Activated CD8-positive, alpha-beta T cell treated with anti-CD3 and anti-CD28 coated beads for 36 hours (primary cell): ENCODE measurements at regions of chr12 and their contacts with region 1.

Region 1: GRCh38 chr12:121060149-121061001 is 21.3 kb upstream of the OASL start:
- DNase-seq: peak; percentile 71
- ATAC-seq: peak; percentile 96
- H3K4me3 Mint-ChIP-seq: peak overlapping the region; percentile 68
- H3K27ac Mint-ChIP-seq: peak overlapping the region; percentile 93
- H3K4me1 Mint-ChIP-seq: peaks cover 13% of the 10 kb centered on the region
- H3K27me3 Mint-ChIP-seq: no peaks in the 10 kb centered on the region
- CTCF ChIP-seq: peak; percentile 61

Region 2: DNA sequence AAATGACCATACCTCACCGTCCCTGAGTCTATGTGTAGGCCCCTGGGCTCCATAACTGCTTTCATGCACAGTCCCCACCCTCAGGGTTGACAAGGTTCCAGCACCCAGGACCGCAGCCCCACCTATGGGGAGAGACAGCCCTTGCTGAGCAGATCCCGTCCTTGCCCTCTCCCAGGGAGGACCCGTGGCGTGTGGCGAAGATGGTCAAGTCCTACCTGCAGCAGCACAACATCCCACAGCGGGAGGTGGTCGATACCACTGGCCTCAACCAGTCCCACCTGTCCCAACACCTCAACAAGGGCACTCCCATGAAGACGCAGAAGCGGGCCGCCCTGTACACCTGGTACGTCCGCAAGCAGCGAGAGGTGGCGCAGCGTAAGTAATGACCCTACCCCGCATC is 71.7 kb before region 1 on chr12:
- CTCF ChIA-PET with region 1: no interaction called
- POLR2A ChIA-PET with region 1: no interaction called
- intact Hi-C with region 1: no loop called
- DNase-seq: no peak
- ATAC-seq: no peak
- H3K4me3 Mint-ChIP-seq: no peak overlapping the region
- H3K27ac Mint-ChIP-seq: no peak overlapping the region
- H3K4me1 Mint-ChIP-seq: no peaks in the 10 kb centered on the region
- H3K27me3 Mint-ChIP-seq: no peaks in the 10 kb centered on the region
- CTCF ChIP-seq: no peak

Region 3: DNA sequence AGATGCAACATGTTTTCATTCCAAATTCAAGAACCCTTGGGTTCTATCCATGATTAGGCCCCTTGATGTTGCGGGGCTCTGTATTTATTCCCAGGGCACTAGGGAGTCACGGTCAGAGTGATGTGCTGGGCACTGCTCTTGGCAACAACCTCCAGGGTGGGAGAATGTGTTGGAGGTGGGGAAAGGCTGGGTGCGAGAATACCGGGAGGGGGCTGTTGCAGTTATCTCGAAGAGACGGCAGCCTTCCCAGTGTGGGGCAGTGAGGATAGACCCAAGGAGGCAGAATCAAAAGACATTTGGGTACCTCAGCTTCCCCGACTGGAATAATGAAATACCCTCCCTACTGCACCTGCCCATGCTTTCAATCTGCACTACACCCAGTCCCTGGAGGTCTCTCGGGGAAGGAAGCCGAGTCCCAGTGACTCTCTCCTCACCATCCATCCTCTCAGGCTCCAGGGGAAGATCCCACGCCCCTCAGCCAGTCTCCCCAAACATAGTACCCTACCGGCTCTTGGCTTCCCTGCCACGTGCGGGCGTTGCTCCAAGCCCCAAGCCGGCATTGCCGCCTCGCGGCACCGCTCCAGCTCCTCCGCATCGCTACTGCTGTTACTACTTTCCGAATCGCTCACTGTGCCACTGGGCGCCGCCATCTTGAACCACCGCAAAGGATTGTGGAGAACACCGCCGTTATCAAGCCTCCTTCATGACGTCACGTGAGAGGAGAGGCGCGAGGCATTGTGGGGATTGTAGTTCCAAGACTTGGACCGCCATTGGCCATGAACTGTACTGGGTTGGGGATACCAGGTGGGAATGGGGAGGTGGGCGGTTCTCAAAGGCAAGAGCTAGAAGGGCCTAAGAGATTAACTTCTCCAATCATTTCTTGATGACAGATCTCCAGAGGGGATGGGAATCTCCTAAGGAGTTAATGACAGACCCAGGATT is 44.3 kb before region 1 on chr12 and contains the start of gene C12orf43:
- CTCF ChIA-PET with region 1: interaction called, 12 read pairs
- POLR2A ChIA-PET with region 1: interaction called, 8 read pairs
- intact Hi-C with region 1: no loop called
- DNase-seq: peak; percentile 98
- ATAC-seq: peak; percentile 98
- H3K4me3 Mint-ChIP-seq: peak within 1 kb of the TSS; percentile 98
- H3K27ac Mint-ChIP-seq: peak within 1 kb of the TSS; percentile 94
- H3K4me1 Mint-ChIP-seq: peaks cover 23% of the 10 kb centered on the region
- H3K27me3 Mint-ChIP-seq: no peaks in the 10 kb centered on the region
- CTCF ChIP-seq: no peak
- total RNA-seq, gene C12orf43: 19.8 to 20.7 TPM

Region 4: GRCh38 chr12:121038861-121039666 is 21.3 kb before region 1 on chr12 and contains the start of gene OASL:
- CTCF ChIA-PET with region 1: interaction called, 20 read pairs
- POLR2A ChIA-PET with region 1: interaction called, 9 read pairs
- intact Hi-C with region 1: no loop called
- DNase-seq: peak; percentile 65
- ATAC-seq: peak; percentile 55
- H3K4me3 Mint-ChIP-seq: peak within 1 kb of the TSS; percentile 80
- H3K27ac Mint-ChIP-seq: peak within 1 kb of the TSS; percentile 87
- H3K4me1 Mint-ChIP-seq: peaks cover 51% of the 10 kb centered on the region
- H3K27me3 Mint-ChIP-seq: peaks cover 9% of the 10 kb centered on the region
- CTCF ChIP-seq: no peak
- total RNA-seq, gene OASL: 11.1 to 11.4 TPM

Region 5: DNA sequence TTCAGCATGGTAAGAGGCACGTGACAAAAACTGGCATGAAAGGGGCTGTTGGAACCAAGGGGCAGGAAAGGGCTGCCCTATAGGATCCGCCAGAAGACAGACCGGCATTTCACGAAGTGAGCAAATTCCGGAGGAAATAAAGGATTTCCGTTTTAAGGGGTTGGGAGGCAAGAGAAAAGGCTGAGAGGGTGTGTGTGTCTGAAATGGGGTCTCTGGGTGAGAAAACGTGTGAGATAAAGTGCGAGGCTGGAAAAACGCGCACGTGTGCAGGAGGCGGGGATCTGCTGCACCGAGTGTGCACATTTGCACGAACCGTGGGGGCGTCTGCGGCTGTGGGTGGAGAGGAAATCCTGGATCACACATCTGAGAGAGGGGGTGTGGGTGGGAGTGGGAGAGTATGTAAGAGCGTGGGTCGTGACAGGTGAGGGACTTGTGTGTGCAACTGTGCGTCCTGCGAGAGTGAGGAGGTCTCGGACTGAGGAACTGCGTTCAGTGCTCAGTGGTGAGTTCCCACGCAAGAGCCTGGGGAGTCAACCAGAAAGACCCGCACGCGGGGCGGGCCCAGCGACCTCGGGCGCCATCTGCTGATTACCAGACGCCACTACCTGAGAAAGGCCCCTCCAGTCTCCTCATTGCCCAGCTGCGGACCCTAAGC is 35.3 kb after region 1 on chr12:
- CTCF ChIA-PET with region 1: interaction called, 23 read pairs
- POLR2A ChIA-PET with region 1: interaction called, 5 read pairs
- intact Hi-C with region 1: loop called (anchors 5 kb)
- DNase-seq: peak; percentile 87
- ATAC-seq: peak; percentile 91
- H3K4me3 Mint-ChIP-seq: peak overlapping the region; percentile 55
- H3K27ac Mint-ChIP-seq: no peak overlapping the region
- H3K4me1 Mint-ChIP-seq: peaks cover 39% of the 10 kb centered on the region
- H3K27me3 Mint-ChIP-seq: peaks cover 5% of the 10 kb centered on the region
- CTCF ChIP-seq: peak; percentile 90

Region 6: DNA sequence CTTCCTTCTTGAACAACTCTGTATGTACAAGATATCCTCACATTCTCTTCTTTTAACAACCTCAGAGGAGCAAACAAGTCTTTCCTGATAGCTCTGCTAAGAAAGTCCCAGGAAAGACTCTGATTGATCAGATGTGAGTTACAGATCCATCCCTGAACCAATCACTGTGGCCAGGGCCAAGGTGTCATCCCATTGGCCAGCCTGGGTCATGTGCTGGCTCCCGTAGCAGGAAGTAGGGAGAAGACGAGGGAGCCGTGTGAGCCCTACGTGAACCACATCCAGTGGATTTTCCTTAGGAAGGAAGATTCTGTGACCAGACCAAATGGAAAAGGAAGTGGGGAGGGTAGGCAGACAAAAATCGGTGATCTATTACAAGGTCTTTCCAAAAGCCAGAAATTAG is 77.9 kb after region 1 on chr12:
- CTCF ChIA-PET with region 1: no interaction called
- POLR2A ChIA-PET with region 1: no interaction called
- intact Hi-C with region 1: no loop called
- DNase-seq: no peak
- ATAC-seq: no peak
- H3K4me3 Mint-ChIP-seq: no peak overlapping the region
- H3K27ac Mint-ChIP-seq: no peak overlapping the region
- H3K4me1 Mint-ChIP-seq: peaks cover 14% of the 10 kb centered on the region
- H3K27me3 Mint-ChIP-seq: no peaks in the 10 kb centered on the region
- CTCF ChIP-seq: no peak

Region 7: DNA sequence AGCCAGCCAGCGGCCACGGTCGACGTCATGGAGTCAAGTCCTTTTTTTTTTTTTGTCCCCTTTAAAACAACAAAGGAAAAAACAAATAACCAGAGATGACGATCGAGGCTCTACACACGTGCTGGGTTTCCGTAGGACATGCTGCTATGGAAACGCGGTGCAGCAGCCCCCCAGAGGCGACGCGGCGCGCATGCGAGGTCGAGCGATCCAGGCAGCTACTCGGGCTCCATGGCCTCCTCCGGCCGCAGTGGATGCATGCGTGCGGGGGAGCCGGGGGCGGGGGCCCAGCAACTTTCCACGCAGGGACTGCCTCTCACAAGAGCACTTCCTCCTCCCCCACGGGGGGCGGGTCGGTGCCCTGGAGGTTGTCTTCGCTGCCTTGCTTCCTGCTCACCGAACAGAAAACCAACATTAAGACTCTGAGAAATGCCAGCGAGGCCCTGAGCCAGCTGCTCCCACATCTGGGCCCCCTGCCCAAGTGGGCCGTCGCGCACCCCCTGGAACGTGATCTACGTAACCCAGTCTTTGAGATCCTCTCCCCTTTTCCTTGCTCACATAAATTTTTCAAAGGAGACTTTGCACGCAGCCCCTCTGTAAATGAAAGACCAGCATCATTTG is 180.2 kb after region 1 on chr12:
- CTCF ChIA-PET with region 1: interaction called, 10 read pairs
- POLR2A ChIA-PET with region 1: no interaction called
- intact Hi-C with region 1: no loop called
- DNase-seq: peak; percentile 88
- ATAC-seq: peak; percentile 88
- H3K4me3 Mint-ChIP-seq: peak overlapping the region; percentile 45
- H3K27ac Mint-ChIP-seq: peak overlapping the region; percentile 79
- H3K4me1 Mint-ChIP-seq: peaks cover 28% of the 10 kb centered on the region
- H3K27me3 Mint-ChIP-seq: no peaks in the 10 kb centered on the region
- CTCF ChIP-seq: no peak